PC-9 (cell line): ENCODE measurements at regions of chr12 and their contacts with region 1.

Region 1: DNA sequence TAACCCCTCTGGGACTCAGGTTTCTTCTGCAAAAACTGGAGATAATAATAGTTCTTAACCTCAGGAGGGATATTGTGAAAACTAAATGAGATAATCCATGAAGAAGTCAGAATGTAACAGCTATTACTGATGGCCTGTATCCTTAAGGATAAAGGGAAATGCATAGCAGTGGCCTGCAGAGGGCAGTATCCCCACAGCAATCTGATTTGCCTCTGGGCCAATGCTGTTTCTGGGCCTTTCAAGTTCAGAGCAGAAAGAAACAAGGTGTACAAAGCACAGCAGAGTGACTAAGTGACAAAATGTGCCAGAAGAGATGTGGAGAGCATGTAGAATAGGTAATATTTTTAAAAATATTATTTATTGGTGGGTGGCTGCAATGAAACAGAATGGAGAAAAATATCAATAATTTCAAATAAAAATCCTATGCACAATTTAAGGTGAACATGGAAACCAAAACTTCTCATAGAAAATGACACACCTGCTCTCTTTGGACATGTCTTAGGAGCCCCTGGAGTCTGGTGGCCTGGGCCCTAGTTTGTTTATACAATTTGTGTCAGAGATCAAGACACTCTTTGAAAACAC is 90.3 kb downstream of the C12orf75 start:
- DNase-seq: peak; percentile 53 to 59
- H3K4me3 ChIP-seq: no peak overlapping the region
- H3K27ac ChIP-seq: no peak overlapping the region
- H3K4me1 ChIP-seq: 0 out of 2 replicates have a peak, but pooled peaks cover 5% of the 10 kb centered on the region
- H3K27me3 ChIP-seq: no peaks in the 10 kb centered on the region
- CTCF ChIP-seq: peak; percentile 97

Region 2: DNA sequence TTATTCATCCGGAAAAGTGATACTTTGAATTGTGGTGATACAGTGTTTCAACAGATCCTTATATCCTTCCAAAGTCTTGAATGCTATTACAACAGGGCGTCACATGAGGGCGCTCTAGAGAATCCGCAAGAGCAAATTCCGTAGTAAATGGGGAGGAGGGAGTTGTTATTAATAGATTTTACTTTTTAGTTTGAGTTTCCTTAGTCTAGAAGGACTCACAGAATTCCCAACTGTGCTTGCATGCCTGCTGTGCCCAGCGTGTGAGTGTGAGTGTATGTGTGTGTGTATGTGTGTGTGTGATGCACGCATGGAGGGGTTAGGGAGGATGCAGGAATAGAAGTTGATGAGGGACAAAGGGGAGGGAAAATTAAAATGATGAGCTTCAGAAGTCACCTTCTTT is 285.0 kb after region 1 on chr12:
- CTCF ChIA-PET with region 1: no interaction called
- POLR2A ChIA-PET with region 1: no interaction called
- intact Hi-C with region 1: loop called (anchors 5 kb)
- DNase-seq: peak in 1 of 2 experiments; percentile 4
- H3K4me3 ChIP-seq: no peak overlapping the region
- H3K27ac ChIP-seq: no peak overlapping the region
- H3K4me1 ChIP-seq: peaks cover 17% of the 10 kb centered on the region
- H3K27me3 ChIP-seq: no peaks in the 10 kb centered on the region
- CTCF ChIP-seq: peak; percentile 78

Region 3: GRCh38 chr12:105934274-105934673 is 513.5 kb after region 1 on chr12:
- CTCF ChIA-PET with region 1: no interaction called
- POLR2A ChIA-PET with region 1: no interaction called
- intact Hi-C with region 1: loop called (anchors 1 kb)
- DNase-seq: peak; percentile 65 to 98
- H3K4me3 ChIP-seq: peak overlapping the region; percentile 20; the same call in 1 of the 2 replicates
- H3K27ac ChIP-seq: peak overlapping the region; percentile 86
- H3K4me1 ChIP-seq: peaks cover 62% of the 10 kb centered on the region
- H3K27me3 ChIP-seq: no peaks in the 10 kb centered on the region
- CTCF ChIP-seq: no peak

Region 4: GRCh38 chr12:106205208-106206071 is 784.7 kb after region 1 on chr12:
- CTCF ChIA-PET with region 1: no interaction called
- POLR2A ChIA-PET with region 1: no interaction called
- intact Hi-C with region 1: loop called (anchors 1 kb)
- DNase-seq: peak; percentile 46 to 47
- H3K4me3 ChIP-seq: no peak overlapping the region
- H3K27ac ChIP-seq: no peak overlapping the region
- H3K4me1 ChIP-seq: no peaks in the 10 kb centered on the region
- H3K27me3 ChIP-seq: peaks cover 22% of the 10 kb centered on the region
- CTCF ChIP-seq: peak; percentile 50